ENCODE measurements at regions of chr12 and their contacts with region 1.

Region 1: DNA sequence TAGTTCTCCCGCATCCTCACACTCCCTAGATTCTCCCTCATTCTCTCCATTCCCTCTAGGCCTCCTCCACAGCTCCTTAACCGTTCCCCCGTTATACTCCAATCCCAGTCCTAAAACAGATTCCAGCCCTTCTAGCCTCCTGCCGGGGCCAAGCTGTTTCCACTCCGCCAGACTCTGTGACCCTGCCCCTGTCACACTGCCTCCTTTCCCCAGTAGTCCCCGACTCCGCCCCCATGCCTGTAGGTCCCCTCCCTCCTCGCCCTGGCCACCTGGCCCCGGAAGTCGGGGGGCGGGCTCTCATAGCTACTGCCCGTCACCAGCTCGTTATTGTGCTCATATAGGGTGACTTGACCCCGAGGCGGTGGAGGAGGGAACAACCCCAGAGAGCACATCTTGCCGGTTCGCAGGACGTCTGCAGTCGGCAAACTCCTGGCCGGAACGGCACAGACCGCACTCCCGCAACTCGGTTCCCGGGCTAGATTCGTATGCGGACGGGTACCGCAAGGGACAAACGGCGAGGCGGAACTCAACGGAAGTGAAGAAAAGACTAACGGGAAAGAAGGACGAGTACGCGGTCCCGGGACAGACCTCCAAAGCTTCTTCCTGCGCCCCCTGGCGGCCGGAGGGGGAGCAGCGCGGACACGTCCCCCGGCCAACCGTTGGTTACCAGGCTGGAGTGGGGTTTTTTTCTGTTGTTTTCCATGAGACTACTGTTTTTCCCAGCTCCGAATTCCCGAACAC is at the start of gene AAAS:
- DNase-seq: peak; percentile 95 to 96
- ATAC-seq: peak; percentile 87 to 94 (median 91)
- H3K4me3 ChIP-seq: peak within 1 kb of the TSS; percentile 26 to 79 (median 67)
- H3K27ac ChIP-seq: peak within 1 kb of the TSS; percentile 69 to 94 (median 86)
- H3K4me1 ChIP-seq: peaks cover 11 to 50% (median 37%) of the 10 kb centered on the region in 9 donors
- H3K27me3 ChIP-seq: peaks cover 0 to 8% (median 0%) of the 10 kb centered on the region in 7 donors
- CTCF ChIP-seq: peak; percentile 97 to 100 (median 100)
- total RNA-seq, gene AAAS: 33.5 to 42.2 (median 34.9) TPM

Region 2: DNA sequence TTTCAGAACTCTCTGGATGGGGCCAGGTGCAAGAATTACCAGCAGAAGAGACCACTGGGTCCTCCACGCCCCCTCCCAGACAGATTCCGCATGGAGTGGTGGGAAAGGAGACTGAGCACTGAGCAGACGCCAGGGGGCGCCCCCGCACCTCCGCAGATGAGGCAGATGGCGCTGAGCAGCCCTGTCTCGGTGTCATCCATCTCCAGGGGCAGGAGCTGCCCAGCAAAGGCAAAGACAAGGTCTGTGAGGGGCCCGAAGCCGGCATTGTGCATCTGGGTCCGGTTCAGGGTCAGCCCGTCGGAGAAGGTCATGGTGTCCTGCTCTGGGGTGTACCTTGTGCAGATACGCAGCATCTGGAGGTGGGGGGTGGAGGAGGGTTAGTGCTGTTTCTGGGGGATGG is 107.9 kb before region 1 on chr12:
- intact Hi-C with region 1: loop called in 1 of 10 experiments (anchors 1 kb)
- DNase-seq: peak; percentile 84 to 89
- ATAC-seq: peak; percentile 72 to 86 (median 80)
- H3K4me3 ChIP-seq: peak overlapping the region in 7 of 10 donors; percentile 10 to 46 (median 41)
- H3K27ac ChIP-seq: peak overlapping the region in 8 of 10 donors; percentile 78 to 100 (median 98)
- H3K4me1 ChIP-seq: peaks cover 13 to 74% (median 63%) of the 10 kb centered on the region in 9 donors
- H3K27me3 ChIP-seq: no peaks in the 10 kb centered on the region
- CTCF ChIP-seq: peak; percentile 93 to 98 (median 95)

Region 3: DNA sequence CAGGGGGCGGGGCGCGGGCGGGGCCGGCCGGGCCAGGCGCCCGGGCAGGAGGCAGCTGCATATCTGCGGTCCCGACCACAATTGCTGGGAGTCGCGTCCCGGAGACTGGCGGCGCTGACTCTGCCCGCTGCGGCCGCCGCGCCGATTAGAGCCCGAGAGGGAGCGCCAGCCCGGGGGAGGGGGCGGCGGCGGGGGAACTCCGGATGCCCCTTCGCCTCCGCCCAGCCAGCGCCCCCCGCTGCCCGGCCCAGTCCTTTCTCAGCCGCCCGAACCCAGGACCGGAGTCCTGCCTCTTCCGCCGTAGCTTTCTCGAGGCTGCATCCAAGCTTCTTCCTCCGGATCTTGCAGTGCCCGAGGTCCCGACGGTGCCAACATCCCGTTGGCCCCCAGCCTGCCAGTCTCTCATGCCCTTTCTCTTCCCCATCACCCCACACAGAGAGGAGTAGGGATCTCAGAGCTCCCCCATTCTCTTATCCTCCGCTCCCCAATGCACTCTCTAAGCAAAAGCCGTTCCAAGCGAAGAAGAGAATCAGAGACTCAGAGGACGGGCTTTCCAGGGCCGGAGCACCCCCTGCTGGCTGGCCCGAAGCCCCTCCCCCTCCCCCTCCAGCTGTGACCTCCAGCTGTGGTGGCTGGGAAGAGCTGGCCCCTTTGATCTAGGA is 23.7 kb after region 1 on chr12:
- intact Hi-C with region 1: loop called in 7 of 10 experiments (anchors 1 to 2 kb)
- DNase-seq: peak; percentile 80 to 82
- ATAC-seq: peak; percentile 91 to 97 (median 95)
- H3K4me3 ChIP-seq: peak overlapping the region; percentile 42 to 82 (median 71)
- H3K27ac ChIP-seq: peak overlapping the region; percentile 55 to 93 (median 86)
- H3K4me1 ChIP-seq: peaks cover 5 to 23% (median 16%) of the 10 kb centered on the region in 9 donors
- H3K27me3 ChIP-seq: no peaks in the 10 kb centered on the region
- CTCF ChIP-seq: peak; percentile 58 to 90 (median 77)

Region 4: GRCh38 chr12:53424626-53425514 is 103.6 kb after region 1 on chr12:
- intact Hi-C with region 1: loop called in 2 of 10 experiments (anchors 1 to 5 kb)
- DNase-seq: no peak
- ATAC-seq: peak in 1 of 8 donors; percentile 4
- H3K4me3 ChIP-seq: no peak overlapping the region
- H3K27ac ChIP-seq: no peak overlapping the region
- H3K4me1 ChIP-seq: peaks cover 0 to 11% (median 8%) of the 10 kb centered on the region in 9 donors
- H3K27me3 ChIP-seq: no peaks in the 10 kb centered on the region
- CTCF ChIP-seq: no peak

Region 5: GRCh38 chr12:53508534-53509199 is 187.4 kb after region 1 on chr12:
- intact Hi-C with region 1: loop called in 5 of 10 experiments (anchors 2 to 10 kb)
- DNase-seq: peak; percentile 86 to 88
- ATAC-seq: peak; percentile 77 to 91 (median 89)
- H3K4me3 ChIP-seq: no peak overlapping the region
- H3K27ac ChIP-seq: peak overlapping the region in 9 of 10 donors; percentile 17 to 74 (median 44)
- H3K4me1 ChIP-seq: peaks cover 0 to 14% (median 10%) of the 10 kb centered on the region in 9 donors
- H3K27me3 ChIP-seq: no peaks in the 10 kb centered on the region
- CTCF ChIP-seq: peak; percentile 86 to 96 (median 93)